Colonic mucosa (tissue), 4 donors: ENCODE measurements at regions of chr19 and their contacts with region 1.

Region 1: DNA sequence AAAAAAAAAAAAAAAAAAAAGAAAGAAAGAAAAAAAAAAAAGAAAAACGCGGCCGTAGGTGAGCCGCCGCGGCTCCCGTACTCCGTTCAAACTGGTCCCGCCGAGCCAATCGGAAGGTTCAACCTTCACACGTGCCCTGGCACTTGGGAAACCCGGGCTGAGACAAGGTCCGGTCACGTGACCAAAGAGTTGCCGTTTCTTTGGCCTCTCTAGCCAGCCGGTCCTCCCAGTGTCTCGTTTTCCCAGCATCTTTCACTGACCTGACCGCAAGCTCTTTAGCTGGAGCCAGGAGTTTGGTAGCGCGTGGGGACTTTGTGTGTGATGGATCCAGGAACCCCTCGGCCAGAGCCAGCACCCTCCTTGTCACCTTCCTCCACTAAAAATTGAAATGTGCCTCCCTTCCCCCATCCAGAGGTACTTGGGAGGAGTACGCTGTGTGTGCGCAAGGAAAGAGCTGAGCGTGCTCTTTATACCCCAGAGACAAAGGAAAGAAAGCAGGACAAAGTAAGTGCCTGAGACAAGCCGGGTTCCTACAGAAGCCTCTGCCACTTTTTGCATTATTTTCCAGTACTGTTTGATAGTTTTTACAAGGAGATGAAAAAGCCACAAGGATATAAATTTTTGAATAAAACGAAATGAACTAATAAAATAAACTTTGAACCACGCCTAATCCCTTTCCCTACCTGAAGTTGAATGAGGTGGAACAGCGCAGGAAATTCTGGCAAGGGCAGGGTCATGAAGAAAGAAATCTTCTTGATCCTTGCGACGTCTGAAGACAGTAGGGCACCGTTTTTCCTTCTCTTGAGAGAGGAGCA is 959 bp downstream of the TNPO2 start:
- DNase-seq: peak; percentile 98
- H3K4me3 ChIP-seq: peak overlapping the region; percentile 72
- H3K27ac ChIP-seq: peak overlapping the region; percentile 82
- H3K4me1 ChIP-seq: no peaks in the 10 kb centered on the region
- H3K27me3 ChIP-seq: no peaks in the 10 kb centered on the region
- CTCF ChIP-seq: no peak

Region 2: GRCh38 chr19:12374026-12374425 is 348.7 kb before region 1 on chr19:
- intact Hi-C with region 1: no loop called
- DNase-seq: no peak
- H3K4me3 ChIP-seq: no peak overlapping the region
- H3K27ac ChIP-seq: no peak overlapping the region
- H3K4me1 ChIP-seq: no peaks in the 10 kb centered on the region
- H3K27me3 ChIP-seq: no peaks in the 10 kb centered on the region
- CTCF ChIP-seq: no peak

Region 3: DNA sequence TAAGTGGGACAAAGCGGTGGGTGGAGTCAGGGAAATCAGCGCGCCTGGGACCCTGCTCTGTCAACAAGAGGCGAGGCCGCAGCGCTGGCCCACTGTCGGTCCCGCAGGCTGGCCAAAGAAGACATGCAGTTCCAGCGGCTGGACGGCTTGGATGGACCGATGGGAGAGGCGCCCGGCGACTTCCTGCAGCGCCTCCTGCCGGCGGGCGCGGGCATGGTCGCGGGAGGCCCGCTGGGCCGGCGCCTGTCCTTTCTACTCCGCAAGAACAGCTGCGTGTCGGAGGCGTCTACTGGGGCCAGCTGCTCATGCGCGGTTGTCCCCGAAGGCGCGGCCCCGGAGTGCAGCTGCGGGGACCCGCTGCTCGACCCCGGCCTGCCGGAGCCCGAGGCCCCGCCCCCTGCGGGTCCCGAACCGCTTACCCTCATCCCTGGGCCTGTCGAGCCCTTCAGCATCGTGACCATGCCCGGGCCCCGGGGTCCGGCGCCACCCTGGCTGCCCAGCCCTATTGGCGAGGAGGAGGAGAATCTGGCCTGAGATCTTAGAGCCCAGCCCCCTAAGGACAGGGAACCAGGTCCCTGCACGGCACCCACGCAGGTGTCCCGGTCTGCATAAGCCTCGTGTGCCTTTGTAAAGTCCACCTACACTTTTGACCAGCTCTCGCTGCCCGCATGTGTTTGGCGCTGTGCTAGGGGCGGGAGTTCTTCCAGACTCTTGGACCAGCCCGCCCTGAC is 34.9 kb after region 1 on chr19:
- intact Hi-C with region 1: loop called (anchors 5 kb)
- DNase-seq: peak; percentile 67
- H3K4me3 ChIP-seq: peak overlapping the region; percentile 24
- H3K27ac ChIP-seq: no peak overlapping the region
- H3K4me1 ChIP-seq: no peaks in the 10 kb centered on the region
- H3K27me3 ChIP-seq: no peaks in the 10 kb centered on the region
- CTCF ChIP-seq: peak; percentile 94